ENCODE measurements at regions of chr10 and their contacts with region 1.

Region 1: GRCh38 chr10:103192451-103193106 is 493 bp downstream of the NT5C2 start:
- DNase-seq: peak; percentile 85 to 92
- H3K4me3 ChIP-seq: peak overlapping the region; percentile 84 to 88
- H3K27ac ChIP-seq: peak overlapping the region; percentile 94 to 99
- H3K4me1 ChIP-seq: peaks cover 0 to 60% (median 34%) of the 10 kb centered on the region in 4 donors
- H3K27me3 ChIP-seq: no peaks in the 10 kb centered on the region
- CTCF ChIP-seq: no peak

Region 2: DNA sequence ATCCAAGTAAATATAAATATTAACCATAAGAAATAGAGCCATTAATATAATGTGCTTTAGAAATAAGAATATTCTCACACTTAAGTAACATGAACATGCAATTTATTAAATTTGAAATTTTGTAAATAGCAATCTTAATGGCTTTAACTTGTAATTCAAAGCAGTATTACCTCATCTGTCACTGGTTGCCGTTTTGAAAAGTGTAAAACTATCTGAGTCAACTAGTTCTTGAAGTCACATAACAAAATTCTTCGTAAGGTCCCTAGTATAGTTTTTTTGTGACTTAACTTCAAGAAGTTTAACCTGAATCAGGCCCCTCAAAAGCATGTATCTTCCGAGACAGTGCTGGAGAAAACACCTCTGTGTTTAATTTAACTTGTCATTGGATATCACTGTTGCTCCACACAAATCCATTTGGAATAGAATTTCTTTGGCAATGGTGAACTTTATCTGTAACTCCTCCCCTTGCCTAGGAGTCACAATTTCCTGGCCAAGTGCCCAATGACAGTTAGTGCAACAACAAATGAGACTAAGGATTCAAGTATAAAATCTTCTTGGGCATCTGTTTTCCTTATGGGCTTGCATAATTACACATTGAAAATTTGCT is 46.6 kb before region 1 on chr10:
- intact Hi-C with region 1: loop called (anchors 10 kb)
- DNase-seq: peak; percentile 78
- H3K4me3 ChIP-seq: peak overlapping the region in 1 of 2 donors; percentile 10
- H3K27ac ChIP-seq: peak overlapping the region; percentile 27 to 54
- H3K4me1 ChIP-seq: peaks cover 0 to 97% (median 37%) of the 10 kb centered on the region in 4 donors
- H3K27me3 ChIP-seq: no peaks in the 10 kb centered on the region
- CTCF ChIP-seq: no peak

Measured in tibial artery (tissue), 4 donors.